Right cardiac atrium (tissue), 5 donors: ENCODE measurements at regions of chrX and their contacts with region 1.

Region 1: GRCh38 chrX:14842696-14843095 is 30.2 kb downstream of the FANCB start:
- DNase-seq: no peak
- ATAC-seq: no peak
- H3K4me3 ChIP-seq: no peak overlapping the region
- H3K27ac ChIP-seq: no peak overlapping the region
- H3K4me1 ChIP-seq: no peaks in the 10 kb centered on the region
- H3K27me3 ChIP-seq: no peaks in the 10 kb centered on the region

Region 2: DNA sequence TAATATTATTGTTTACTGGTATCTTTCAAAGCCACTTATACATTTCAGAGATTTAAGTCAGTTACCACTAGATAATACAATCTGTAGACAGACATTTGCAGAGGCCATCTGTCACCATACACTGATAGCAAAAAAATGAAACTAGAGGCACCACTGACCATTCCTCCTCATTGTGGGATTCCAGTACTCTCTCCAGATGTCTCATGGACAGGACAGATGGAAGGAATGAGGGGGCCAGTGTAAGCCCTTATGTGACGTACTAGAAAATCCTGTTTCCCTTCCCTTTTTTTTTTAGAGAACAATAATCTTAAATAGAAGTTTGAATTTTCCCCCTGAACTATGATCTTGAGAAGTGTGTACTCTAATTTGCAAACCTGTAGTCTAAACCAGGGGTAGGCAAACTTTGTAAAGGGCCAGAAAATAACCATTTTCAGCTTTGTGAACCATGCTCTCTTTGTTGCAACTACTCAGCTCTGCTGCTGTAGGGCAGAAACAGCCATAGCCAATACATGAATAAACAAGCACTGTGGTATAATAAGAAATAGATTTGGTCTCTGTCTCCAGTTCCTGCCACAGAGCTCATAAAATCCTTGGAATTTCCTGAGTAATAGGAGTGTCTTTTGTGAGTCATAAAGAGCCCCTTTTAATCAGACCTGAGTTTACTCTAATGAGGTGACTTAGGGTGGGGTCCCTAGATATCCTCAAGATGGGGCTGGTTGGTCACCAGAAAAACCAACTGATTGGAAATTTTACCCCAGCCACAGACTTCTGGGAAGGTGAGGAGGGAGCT is 120.9 kb after region 1 on chrX:
- intact Hi-C with region 1: loop called in 1 of 4 experiments (anchors 10 kb)
- DNase-seq: no peak
- ATAC-seq: no peak
- H3K4me3 ChIP-seq: no peak overlapping the region
- H3K27ac ChIP-seq: no peak overlapping the region
- H3K4me1 ChIP-seq: no peaks in the 10 kb centered on the region
- H3K27me3 ChIP-seq: no peaks in the 10 kb centered on the region

Region 3: DNA sequence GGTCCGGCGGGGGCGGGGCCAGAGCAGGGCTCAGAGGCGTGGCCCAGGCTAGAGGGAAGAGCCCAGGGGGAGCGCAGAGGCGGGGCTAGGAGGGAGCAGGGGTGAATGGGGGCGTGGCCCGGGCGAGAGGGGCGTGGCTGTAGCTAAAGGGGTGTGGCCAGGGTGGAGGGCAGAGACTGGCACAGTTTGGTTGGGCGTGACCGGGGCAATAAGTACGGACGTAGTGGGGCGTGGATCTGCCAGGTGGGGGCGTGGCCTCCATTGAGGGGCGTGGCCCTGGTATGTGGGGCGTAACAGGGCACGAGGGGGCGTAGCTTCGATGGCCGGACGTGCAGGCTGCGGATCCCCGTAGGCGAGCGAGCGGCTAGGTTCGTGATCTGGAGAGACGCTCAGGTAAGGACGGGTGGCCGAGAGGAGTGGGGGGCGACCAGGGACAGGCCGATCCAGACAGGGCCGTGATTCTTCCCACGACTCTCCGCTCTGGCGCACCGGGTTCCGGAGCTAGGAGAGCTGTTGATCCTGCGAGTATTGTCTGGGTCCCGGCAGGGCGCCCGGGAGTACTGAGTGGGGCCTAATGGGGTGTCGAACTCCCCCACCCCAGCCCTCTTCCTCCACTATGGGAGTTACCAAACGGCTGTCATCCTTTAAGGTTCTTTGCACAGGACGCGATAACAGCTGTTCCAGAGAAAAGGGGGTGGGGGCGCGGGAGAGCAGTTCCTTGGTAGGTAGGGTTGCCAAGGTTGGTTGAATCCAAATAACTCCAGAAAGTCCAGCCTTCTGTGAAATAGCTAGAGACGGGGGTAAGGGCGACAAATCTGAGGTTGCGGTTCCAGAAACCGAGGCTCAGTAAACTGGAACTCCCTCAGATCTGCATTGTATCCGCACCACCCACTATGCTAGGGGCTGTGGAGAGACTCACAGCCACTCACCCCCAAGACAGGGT is 895.5 kb after region 1 on chrX and contains the start of gene CA5B:
- intact Hi-C with region 1: no loop called
- DNase-seq: peak; percentile 93 to 98 (median 96)
- ATAC-seq: peak; percentile 99 to 100
- H3K4me3 ChIP-seq: peak within 1 kb of the TSS; percentile 43
- H3K27ac ChIP-seq: peak within 1 kb of the TSS; percentile 27
- H3K4me1 ChIP-seq: peaks cover 2% of the 10 kb centered on the region
- H3K27me3 ChIP-seq: no peaks in the 10 kb centered on the region
- total RNA-seq, gene CA5B: 4.5 to 7.5 (median 6.6) TPM